Activated CD8-positive, alpha-beta T cell treated with anti-CD3 and anti-CD28 coated beads for 36 hours (primary cell): ENCODE measurements at regions of chr10 and their contacts with region 1.

Region 1: DNA sequence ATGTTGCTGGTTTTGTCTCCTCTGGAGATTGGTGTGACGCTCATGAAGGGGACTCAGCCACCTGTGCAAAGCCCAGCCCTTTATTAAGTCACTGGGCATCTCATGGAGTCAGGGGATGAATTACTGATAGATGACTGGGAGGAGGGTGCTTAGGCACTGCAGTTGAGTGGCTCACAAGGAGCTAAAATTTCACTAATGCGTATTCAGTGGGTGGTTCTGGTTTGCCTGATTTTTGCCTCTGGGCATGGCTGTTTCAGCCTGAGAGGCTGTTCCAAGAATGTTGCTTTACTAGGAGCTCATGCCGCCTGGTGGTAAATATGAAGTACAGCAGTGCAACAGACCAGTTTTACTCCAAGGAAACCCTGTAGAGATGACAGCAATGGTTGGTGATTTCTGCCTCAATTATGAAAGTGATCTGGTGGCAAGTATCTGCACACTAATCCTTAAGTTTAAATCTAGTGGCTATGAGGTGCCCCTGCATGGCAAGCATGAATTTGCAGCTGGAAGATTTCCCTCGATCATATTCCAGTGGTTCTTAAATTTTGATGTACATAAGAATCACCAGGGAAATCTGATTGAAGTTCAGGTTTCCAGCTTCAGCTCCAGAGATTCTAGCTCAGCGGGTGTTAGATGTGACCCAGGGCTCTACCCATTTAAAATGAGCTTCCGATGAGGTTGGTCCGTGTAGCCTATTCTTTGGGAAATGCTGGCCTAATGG is 19.9 kb downstream of the ACTA2 start:
- DNase-seq: peak; percentile 57
- ATAC-seq: peak; percentile 86
- H3K4me3 Mint-ChIP-seq: no peak overlapping the region
- H3K27ac Mint-ChIP-seq: peak overlapping the region; percentile 38
- H3K4me1 Mint-ChIP-seq: peaks cover 25% of the 10 kb centered on the region
- H3K27me3 Mint-ChIP-seq: no peaks in the 10 kb centered on the region
- CTCF ChIP-seq: peak; percentile 74

Region 2: GRCh38 chr10:88728107-88728763 is 204.5 kb before region 1 on chr10:
- CTCF ChIA-PET with region 1: interaction called, 30 read pairs
- POLR2A ChIA-PET with region 1: interaction called, 3 read pairs
- intact Hi-C with region 1: no loop called
- DNase-seq: peak; percentile 78
- ATAC-seq: peak; percentile 81
- H3K4me3 Mint-ChIP-seq: no peak overlapping the region
- H3K27ac Mint-ChIP-seq: no peak overlapping the region
- H3K4me1 Mint-ChIP-seq: peaks cover 4% of the 10 kb centered on the region
- H3K27me3 Mint-ChIP-seq: peaks cover 4% of the 10 kb centered on the region
- CTCF ChIP-seq: peak; percentile 61

Region 3: DNA sequence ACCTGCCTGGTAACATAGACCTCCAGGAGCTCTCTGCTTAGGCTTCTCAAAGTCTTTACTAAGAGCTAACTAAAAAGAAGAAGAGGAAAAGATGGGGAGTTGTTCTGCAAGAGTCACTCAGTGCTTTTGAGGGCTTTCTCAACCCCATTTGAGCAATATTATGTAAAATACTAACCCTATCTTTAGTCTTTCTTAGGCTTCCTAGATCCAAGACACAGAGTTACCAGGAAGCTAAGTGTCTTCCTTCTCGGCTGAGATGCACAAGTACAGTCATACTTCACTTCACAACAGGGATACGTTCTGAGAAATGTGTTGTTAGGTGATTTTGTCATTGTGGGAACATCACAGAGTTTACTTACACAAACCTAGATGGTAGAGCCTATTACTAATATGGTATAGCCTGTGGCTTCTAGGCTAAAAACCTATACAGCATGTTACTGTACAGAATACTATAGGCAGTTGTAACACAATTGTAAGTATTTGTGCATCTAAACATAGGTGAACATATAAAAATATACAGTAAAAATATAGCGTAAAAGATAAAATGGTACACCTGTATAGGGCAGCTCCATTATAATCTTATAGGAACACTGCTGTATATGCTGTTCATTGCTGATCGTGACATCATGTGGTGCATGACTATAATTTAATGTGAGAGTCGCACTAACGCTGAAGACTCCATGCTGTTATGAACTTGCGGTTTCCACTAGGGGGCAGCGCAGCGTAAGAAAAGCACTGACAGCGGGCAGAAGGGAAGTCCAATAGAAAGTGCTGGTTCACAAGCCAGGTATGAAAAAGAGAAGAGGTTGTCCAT is 97.4 kb before region 1 on chr10:
- CTCF ChIA-PET with region 1: interaction called, 432 read pairs
- POLR2A ChIA-PET with region 1: interaction called, 5 read pairs
- intact Hi-C with region 1: loop called (anchors 1 kb)
- DNase-seq: peak; percentile 95
- ATAC-seq: peak; percentile 84
- H3K4me3 Mint-ChIP-seq: no peak overlapping the region
- H3K27ac Mint-ChIP-seq: no peak overlapping the region
- H3K4me1 Mint-ChIP-seq: peaks cover 35% of the 10 kb centered on the region
- H3K27me3 Mint-ChIP-seq: no peaks in the 10 kb centered on the region
- CTCF ChIP-seq: peak; percentile 86

Region 4: DNA sequence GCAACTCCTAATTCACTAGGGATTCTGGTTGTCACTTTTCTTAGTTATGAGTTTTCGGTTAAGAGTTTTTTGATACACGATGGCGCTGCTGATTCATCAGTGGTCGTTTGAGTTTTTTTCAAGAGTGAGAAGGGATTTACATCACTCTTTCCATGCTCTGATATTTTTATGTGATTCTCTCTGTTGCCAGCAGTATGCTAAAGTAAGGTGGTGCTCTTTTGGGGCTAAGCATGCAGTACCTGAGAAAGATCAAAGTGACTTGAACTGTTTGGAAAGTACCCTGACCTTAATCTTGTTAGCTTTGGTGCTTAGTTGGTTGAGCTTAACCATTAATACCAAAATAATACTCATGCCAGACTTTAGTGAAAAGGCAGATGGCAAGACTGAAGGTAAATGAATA is 24.5 kb before region 1 on chr10:
- CTCF ChIA-PET with region 1: interaction called, 43 read pairs
- POLR2A ChIA-PET with region 1: no interaction called
- intact Hi-C with region 1: no loop called
- DNase-seq: peak; percentile 51
- ATAC-seq: peak; percentile 95
- H3K4me3 Mint-ChIP-seq: no peak overlapping the region
- H3K27ac Mint-ChIP-seq: peak overlapping the region; percentile 79
- H3K4me1 Mint-ChIP-seq: peaks cover 27% of the 10 kb centered on the region
- H3K27me3 Mint-ChIP-seq: no peaks in the 10 kb centered on the region
- CTCF ChIP-seq: no peak

Region 5: GRCh38 chr10:88990384-88991160 is 57.9 kb after region 1 on chr10 and contains the start of gene FAS:
- CTCF ChIA-PET with region 1: interaction called, 35 read pairs
- POLR2A ChIA-PET with region 1: interaction called, 4 read pairs
- intact Hi-C with region 1: loop called (anchors 10 kb)
- DNase-seq: peak; percentile 91
- ATAC-seq: peak; percentile 79
- H3K4me3 Mint-ChIP-seq: peak within 1 kb of the TSS; percentile 86
- H3K27ac Mint-ChIP-seq: peak within 1 kb of the TSS; percentile 96
- H3K4me1 Mint-ChIP-seq: peaks cover 54% of the 10 kb centered on the region
- H3K27me3 Mint-ChIP-seq: no peaks in the 10 kb centered on the region
- CTCF ChIP-seq: no peak
- total RNA-seq, gene FAS: 48.6 to 49.0 TPM

Region 6: GRCh38 chr10:89022734-89023133 is 90.0 kb after region 1 on chr10:
- CTCF ChIA-PET with region 1: interaction called, 27 read pairs
- POLR2A ChIA-PET with region 1: interaction called, 4 read pairs
- intact Hi-C with region 1: no loop called
- DNase-seq: no peak
- ATAC-seq: no peak
- H3K4me3 Mint-ChIP-seq: no peak overlapping the region
- H3K27ac Mint-ChIP-seq: no peak overlapping the region
- H3K4me1 Mint-ChIP-seq: no peaks in the 10 kb centered on the region
- H3K27me3 Mint-ChIP-seq: no peaks in the 10 kb centered on the region
- CTCF ChIP-seq: no peak

Region 7: DNA sequence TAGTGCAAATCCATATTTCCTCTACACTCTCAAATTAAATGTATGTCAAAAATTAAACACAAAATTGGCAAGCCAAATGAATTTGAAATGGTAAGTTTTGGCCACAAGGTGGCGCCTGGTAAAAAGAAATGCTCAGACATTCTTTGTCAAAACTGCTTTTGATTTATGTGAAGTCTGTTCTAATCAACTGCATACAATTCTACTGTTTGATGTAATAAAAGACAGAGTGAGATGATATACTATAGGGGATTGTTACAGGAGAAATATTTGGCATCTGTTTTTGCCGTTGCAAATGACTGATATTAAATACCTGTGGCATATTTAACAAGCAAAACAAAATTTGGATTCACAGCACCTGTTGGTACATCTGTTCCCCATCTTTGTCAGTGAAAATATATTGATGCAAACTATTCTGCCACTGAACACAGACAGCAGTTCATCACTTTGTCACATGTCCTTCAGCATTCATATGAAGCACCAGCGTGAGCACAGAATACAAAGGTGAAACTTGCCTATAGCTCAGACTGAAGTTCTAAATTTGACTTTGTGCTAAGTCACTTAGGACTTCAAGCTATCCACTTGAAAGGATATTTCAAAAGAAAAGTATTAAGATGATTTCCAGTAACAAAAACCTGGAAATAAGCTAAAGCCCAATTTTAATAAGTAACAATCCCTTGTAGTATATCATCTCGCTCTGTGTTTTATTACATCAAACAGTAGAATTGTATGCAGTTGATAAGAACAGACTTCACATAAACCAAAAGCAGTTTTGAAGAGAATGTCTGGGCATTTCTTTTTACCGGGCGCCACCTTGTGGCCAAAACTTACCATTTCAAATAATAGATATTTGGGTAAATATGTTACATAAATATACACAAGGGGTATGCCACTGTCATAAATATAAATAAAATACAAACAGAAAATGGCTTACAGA is 284.6 kb after region 1 on chr10:
- CTCF ChIA-PET with region 1: interaction called, 82 read pairs
- POLR2A ChIA-PET with region 1: no interaction called
- intact Hi-C with region 1: loop called (anchors 1 kb)
- DNase-seq: peak; percentile 83
- ATAC-seq: peak; percentile 39
- H3K4me3 Mint-ChIP-seq: no peak overlapping the region
- H3K27ac Mint-ChIP-seq: no peak overlapping the region
- H3K4me1 Mint-ChIP-seq: peaks cover 12% of the 10 kb centered on the region
- H3K27me3 Mint-ChIP-seq: peaks cover 1% of the 10 kb centered on the region
- CTCF ChIP-seq: peak; percentile 57